ENCODE measurements at regions of chr2 and their contacts with region 1.

Region 1: GRCh38 chr2:230824406-230824978 is 40.2 kb upstream of the ITM2C start:
- DNase-seq: peak in 3 of 5 donors; percentile 37 to 62 (median 48)
- ATAC-seq: peak; percentile 39 to 76 (median 70)
- H3K4me3 ChIP-seq: peak overlapping the region in 7 of 12 donors; percentile 4 to 44 (median 26)
- H3K27ac ChIP-seq: no peak overlapping the region
- H3K4me1 ChIP-seq: peaks cover 0 to 16% (median 10%) of the 10 kb centered on the region in 12 donors
- H3K27me3 ChIP-seq: peaks cover 0 to 37% (median 24%) of the 10 kb centered on the region in 9 donors
- CTCF ChIP-seq: peak; percentile 57 to 83 (median 73)
- POLR2A ChIP-seq: no peak

Region 2: DNA sequence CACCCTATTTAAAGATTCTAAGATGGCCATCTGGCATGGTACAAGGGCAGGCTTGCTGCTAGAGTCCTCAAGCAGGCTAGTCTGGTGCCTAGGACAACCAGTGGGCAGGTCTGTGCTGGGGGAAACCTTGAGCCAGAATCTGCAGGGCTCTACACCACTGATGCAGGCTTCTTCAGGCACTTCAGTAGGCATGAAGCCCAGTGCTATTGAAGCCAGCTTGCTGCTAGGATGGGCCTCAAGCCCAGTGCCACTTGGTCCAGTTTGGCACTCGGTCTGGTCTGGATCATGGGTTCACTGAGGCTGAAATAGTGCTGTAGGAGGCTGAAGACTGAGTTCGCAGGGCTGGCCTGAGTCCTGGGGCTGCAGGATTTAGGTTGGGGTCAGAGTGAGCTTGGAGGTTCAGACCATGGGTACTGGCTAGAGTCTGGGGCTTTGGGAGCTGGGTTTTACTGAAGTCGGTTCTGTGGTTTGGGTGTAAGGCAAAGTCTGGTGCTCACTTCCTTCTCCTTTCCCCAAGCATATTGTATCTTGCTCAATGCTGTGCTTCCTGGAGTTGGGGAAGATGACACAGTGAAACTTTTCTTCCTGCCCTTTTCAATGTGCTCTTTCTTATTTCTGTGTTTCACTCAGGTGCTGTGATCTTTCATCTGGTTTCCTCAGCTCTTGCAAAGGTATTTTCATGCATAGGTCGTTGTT is 367.3 kb before region 1 on chr2:
- intact Hi-C with region 1: no loop called
- DNase-seq: peak in 1 of 5 donors; percentile 21
- ATAC-seq: peak in 3 of 4 donors; percentile 36 to 84 (median 80)
- H3K4me3 ChIP-seq: no peak overlapping the region
- H3K27ac ChIP-seq: peak overlapping the region in 1 of 12 donors; percentile 88
- H3K4me1 ChIP-seq: peaks cover 0 to 36% (median 0%) of the 10 kb centered on the region in 12 donors
- H3K27me3 ChIP-seq: no peaks in the 10 kb centered on the region
- CTCF ChIP-seq: no peak
- POLR2A ChIP-seq: no peak

Region 3: DNA sequence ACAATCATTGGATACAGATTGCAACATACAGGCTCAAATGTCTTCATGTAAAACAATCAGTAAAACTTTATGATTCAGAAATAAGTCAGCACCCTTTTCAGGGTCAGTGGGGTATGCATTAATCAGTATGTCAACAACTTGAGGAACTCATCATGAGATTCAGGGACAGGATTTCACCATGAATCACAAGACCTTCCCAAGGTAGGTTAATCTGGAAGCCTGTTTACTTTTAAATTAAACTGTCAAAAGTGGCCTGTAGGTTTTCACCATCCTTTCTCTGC is 303.7 kb before region 1 on chr2:
- intact Hi-C with region 1: no loop called
- DNase-seq: no peak
- ATAC-seq: no peak
- H3K4me3 ChIP-seq: no peak overlapping the region
- H3K27ac ChIP-seq: no peak overlapping the region
- H3K4me1 ChIP-seq: no peaks in the 10 kb centered on the region
- H3K27me3 ChIP-seq: no peaks in the 10 kb centered on the region
- CTCF ChIP-seq: no peak
- POLR2A ChIP-seq: no peak

Region 4: DNA sequence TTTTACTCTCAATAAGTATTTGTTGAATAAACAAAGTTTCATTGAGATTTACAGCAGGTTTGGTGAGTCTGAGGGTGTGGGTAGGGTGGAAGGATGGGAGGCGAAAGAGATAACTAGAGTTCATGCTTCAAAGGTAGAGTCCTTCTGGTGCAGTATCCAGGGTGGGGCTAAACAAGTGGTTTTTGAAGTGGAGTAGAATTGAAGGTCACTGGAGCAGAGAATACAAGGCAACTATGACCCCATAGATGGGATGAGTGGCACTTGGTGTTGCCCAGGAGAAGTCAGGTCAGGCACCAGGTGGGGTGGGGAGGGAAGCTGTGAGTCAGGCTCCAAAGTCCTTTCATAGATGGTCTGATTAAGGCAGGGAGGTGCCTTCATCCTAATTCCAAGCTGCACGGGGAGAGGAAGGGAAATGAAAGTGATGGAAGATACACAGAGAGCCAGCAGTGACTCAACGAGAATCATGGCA is 118.4 kb before region 1 on chr2:
- intact Hi-C with region 1: no loop called
- DNase-seq: no peak
- ATAC-seq: no peak
- H3K4me3 ChIP-seq: no peak overlapping the region
- H3K27ac ChIP-seq: no peak overlapping the region
- H3K4me1 ChIP-seq: peaks cover 0 to 19% (median 0%) of the 10 kb centered on the region in 12 donors
- H3K27me3 ChIP-seq: no peaks in the 10 kb centered on the region
- CTCF ChIP-seq: no peak
- POLR2A ChIP-seq: no peak

Region 5: GRCh38 chr2:230809677-230810251 is 14.7 kb before region 1 on chr2:
- intact Hi-C with region 1: no loop called
- DNase-seq: no peak
- ATAC-seq: no peak
- H3K4me3 ChIP-seq: no peak overlapping the region
- H3K27ac ChIP-seq: no peak overlapping the region
- H3K4me1 ChIP-seq: peaks cover 0 to 11% (median 0%) of the 10 kb centered on the region in 12 donors
- H3K27me3 ChIP-seq: no peaks in the 10 kb centered on the region
- CTCF ChIP-seq: no peak
- POLR2A ChIP-seq: no peak

Region 6: GRCh38 chr2:230847883-230848388 is 23.4 kb after region 1 on chr2:
- intact Hi-C with region 1: loop called in 1 of 10 experiments (anchors 2 kb)
- DNase-seq: peak; percentile 82 to 92 (median 84)
- ATAC-seq: peak in 3 of 4 donors; percentile 87 to 94 (median 88)
- H3K4me3 ChIP-seq: peak overlapping the region in 6 of 12 donors; percentile 15 to 38 (median 30)
- H3K27ac ChIP-seq: no peak overlapping the region
- H3K4me1 ChIP-seq: peaks cover 0 to 9% (median 0%) of the 10 kb centered on the region in 12 donors
- H3K27me3 ChIP-seq: peaks cover 0 to 47% (median 13%) of the 10 kb centered on the region in 9 donors
- CTCF ChIP-seq: peak; percentile 77 to 97 (median 90)
- POLR2A ChIP-seq: no peak

Region 7: DNA sequence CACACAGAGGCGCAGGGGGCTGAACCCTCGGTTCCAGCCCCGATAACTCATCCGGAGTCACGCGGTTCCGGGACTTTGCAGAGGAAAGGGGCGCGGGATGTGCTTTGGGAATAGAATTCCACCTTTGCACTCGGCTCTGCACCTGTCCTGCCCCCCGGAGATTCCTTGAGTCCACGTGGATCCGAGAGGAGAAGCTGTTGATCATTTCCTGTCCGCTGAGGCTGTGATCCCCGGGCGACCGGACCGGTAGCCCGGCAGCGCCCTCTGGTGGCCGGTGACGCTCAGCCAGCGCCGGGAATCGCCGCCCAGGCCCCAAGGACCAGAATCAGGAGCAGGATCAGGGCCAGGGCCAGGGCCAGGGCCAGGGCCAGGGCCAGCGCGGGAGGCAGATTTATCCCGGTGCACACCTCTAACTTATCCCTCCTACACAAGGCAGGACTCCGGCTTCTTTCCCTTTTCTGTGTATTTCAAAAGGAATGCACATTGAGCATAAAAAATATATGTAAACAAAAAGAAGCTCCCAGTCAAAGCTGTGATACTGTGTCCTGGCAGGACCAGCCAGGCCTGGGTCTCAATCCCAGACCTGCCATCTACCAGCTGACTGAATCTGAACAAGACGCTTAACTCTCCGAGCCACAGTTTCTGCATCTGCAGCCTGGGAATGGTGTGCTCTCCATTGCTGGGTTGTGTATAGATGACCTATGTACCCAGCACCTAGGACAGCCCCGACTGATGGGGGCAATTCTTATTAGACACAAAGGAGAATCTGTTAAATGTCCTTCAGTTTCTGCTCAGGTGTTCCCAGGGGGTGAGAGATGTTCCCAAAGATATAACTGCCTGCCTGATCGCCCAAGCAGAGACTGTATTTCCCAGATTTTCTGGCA is 162.9 kb after region 1 on chr2:
- intact Hi-C with region 1: loop called (anchors 1 to 2 kb)
- DNase-seq: peak; percentile 72 to 90 (median 77)
- ATAC-seq: peak; percentile 64 to 94 (median 84)
- H3K4me3 ChIP-seq: peak overlapping the region in 11 of 12 donors; percentile 10 to 48 (median 39)
- H3K27ac ChIP-seq: no peak overlapping the region
- H3K4me1 ChIP-seq: peaks cover 0 to 5% (median 4%) of the 10 kb centered on the region in 12 donors
- H3K27me3 ChIP-seq: peaks cover 7 to 39% (median 27%) of the 10 kb centered on the region in 9 donors
- CTCF ChIP-seq: peak; percentile 89 to 97 (median 95)
- POLR2A ChIP-seq: no peak

Region 8: GRCh38 chr2:231050018-231050901 is 225.8 kb after region 1 on chr2:
- intact Hi-C with region 1: loop called in 5 of 10 experiments (anchors 2 to 10 kb)
- DNase-seq: no peak
- ATAC-seq: no peak
- H3K4me3 ChIP-seq: no peak overlapping the region
- H3K27ac ChIP-seq: no peak overlapping the region
- H3K4me1 ChIP-seq: peaks cover 0 to 8% (median 4%) of the 10 kb centered on the region in 12 donors
- H3K27me3 ChIP-seq: peaks cover 0 to 16% (median 0%) of the 10 kb centered on the region in 9 donors
- CTCF ChIP-seq: no peak
- POLR2A ChIP-seq: no peak

Region 9: DNA sequence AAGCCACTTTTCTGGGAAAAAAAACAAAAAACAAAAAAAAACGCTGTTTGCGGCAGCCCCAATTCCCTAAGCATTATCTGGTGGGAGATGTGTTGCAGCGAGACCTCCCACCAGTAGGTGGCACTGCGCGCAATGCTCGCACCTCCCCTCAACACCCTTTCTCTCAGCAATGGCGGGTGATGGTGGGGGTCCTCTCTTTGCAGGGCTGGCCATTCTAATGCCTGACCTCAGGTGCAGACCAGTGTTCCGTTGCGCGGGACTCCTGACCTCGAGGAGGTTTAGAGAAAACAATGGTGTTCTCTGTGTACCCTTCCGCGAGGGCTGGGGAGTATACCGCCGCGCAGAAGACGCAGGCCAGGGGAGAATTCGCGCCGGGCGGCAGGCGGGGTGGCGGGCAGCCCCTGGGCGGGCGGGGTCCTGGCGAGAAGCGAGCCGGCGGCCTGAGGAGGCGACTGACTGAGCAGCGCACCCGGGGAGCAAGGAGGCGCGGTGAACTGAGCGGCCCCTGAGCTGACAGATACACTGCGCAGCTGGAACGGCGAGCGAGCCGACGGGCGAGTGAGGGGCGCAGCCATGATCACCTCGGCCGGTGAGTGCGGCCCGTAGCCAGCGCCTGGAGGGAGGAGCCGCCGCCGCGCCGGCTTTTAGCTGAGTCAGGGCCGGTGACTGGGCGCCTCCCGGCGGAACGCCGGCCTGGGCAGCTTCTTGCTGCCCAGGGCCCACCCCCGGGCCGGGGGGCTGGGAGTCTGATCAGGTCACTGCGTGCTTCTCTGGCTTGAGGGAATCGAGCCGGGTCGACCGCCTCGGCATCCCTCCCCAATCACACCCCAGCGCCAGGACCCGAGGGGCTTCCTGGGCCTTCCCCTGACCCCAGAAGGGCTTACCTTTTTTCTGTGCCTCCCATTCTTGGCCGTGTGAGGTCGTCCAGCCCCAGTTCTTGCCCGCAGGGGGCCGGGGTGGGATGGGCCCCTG is 232.2 kb after region 1 on chr2 and contains the start of gene PSMD1:
- intact Hi-C with region 1: loop called in 5 of 10 experiments (anchors 2 to 10 kb)
- DNase-seq: peak; percentile 92 to 95 (median 93)
- ATAC-seq: peak; percentile 85 to 92 (median 90)
- H3K4me3 ChIP-seq: peak within 1 kb of the TSS; percentile 71 to 100 (median 91)
- H3K27ac ChIP-seq: peak within 1 kb of the TSS; percentile 90 to 99 (median 93)
- H3K4me1 ChIP-seq: peaks cover 0 to 42% (median 32%) of the 10 kb centered on the region in 12 donors
- H3K27me3 ChIP-seq: no peaks in the 10 kb centered on the region
- CTCF ChIP-seq: peak; percentile 91 to 99 (median 97)
- POLR2A ChIP-seq: peak in 1 of 2 donors; percentile 42
- total RNA-seq, gene PSMD1: 66.1 to 124 (median 93.7) TPM

Region 10: DNA sequence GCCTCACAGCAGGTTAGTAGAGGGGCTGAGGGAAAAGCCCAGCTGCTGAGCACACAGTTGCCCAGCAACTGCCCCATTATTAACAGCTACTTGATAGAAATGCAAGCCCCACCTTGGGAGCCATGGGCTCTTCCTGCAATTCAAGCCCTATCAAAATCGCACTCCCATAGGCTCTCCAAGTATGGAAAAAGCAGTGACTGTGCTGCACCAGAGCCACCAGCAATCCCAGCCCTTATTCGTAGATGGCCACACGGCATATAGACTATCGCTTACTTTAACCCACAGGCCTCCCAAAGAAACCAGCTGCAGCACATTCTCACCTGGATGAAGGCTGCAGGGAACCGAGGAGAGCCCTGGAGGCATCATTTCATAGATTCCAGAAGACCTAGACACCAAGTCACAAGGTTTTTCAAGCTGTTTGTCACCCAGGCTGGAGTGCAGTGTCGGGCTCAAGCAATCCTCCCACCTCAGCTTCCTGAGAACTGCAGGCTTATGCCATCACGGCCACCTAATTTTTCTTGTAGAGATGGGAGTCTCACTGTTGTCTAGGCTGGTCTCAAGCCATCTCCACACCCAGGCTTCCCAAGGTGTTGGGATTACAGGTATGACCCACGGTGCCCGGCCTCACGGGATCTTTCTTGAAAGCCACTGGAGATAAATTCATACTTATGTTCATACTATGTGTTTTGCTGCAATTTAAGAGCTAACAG is 628.5 kb after region 1 on chr2:
- intact Hi-C with region 1: loop called in 1 of 10 experiments (anchors 10 kb)
- DNase-seq: no peak
- ATAC-seq: peak in 3 of 4 donors; percentile 5 to 15 (median 13)
- H3K4me3 ChIP-seq: no peak overlapping the region
- H3K27ac ChIP-seq: peak overlapping the region in 1 of 12 donors; percentile 12
- H3K4me1 ChIP-seq: peaks cover 0 to 6% (median 0%) of the 10 kb centered on the region in 12 donors
- H3K27me3 ChIP-seq: no peaks in the 10 kb centered on the region
- CTCF ChIP-seq: no peak
- POLR2A ChIP-seq: no peak